ENCODE measurements at regions of chrX and their contacts with region 1.

Region 1: GRCh38 chrX:123357941-123358340 is 173.9 kb downstream of the GRIA3 start:
- DNase-seq: peak; percentile 41
- ATAC-seq: peak; percentile 95
- H3K4me3 ChIP-seq: no peak overlapping the region
- H3K27ac ChIP-seq: no peak overlapping the region; the same call in 1 of the 2 replicates
- H3K4me1 ChIP-seq: no peaks in the 10 kb centered on the region
- H3K27me3 ChIP-seq: no peaks in the 10 kb centered on the region
- CTCF ChIP-seq: no peak
- EP300 ChIP-seq: peak in 1 of 2 experiments; percentile 61; a peak in 1 of 4 replicates
- POLR2A ChIP-seq: no peak
- RAD21 ChIP-seq: 0 out of 2 replicates have a peak, but pooled peaks have one; percentile 5

Region 2: GRCh38 chrX:123267220-123267619 is 90.7 kb before region 1 on chrX:
- CTCF ChIA-PET with region 1: no interaction called
- POLR2A ChIA-PET with region 1: no interaction called
- RAD21 ChIA-PET with region 1: interaction called, 10 read pairs
- SMC1A ChIA-PET with region 1: interaction called, 3 read pairs
- in situ Hi-C with region 1: no loop called
- intact Hi-C with region 1: no loop called
- DNase-seq: no peak
- ATAC-seq: no peak
- H3K4me3 ChIP-seq: no peak overlapping the region
- H3K27ac ChIP-seq: no peak overlapping the region
- H3K4me1 ChIP-seq: no peaks in the 10 kb centered on the region
- H3K27me3 ChIP-seq: no peaks in the 10 kb centered on the region
- CTCF ChIP-seq: no peak
- EP300 ChIP-seq: no peak
- POLR2A ChIP-seq: no peak
- RAD21 ChIP-seq: no peak

Region 3: DNA sequence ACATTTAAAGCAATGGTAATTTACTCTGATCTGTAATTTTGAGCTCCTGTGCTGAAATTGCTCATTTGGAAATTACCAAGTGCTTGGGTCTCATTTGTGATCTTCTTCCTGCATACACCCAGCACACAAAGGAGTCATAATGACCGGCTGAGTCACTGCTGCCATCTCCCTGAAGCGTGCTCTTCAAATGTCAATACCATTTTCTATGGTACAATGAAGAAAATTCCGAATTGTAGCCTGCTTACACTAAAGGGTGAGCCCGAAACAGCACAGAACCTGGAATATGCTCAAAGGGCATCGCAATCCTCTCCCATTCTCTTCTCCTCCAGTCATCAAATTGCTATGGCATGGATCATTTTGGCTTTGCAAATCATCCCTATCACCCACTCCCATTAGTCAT is 33.3 kb before region 1 on chrX:
- CTCF ChIA-PET with region 1: interaction called, 7 read pairs
- POLR2A ChIA-PET with region 1: interaction called, 9 read pairs
- RAD21 ChIA-PET with region 1: interaction called, 58 read pairs
- SMC1A ChIA-PET with region 1: interaction called, 72 read pairs
- in situ Hi-C with region 1: no loop called
- intact Hi-C with region 1: no loop called
- DNase-seq: no peak
- ATAC-seq: peak; percentile 76
- H3K4me3 ChIP-seq: no peak overlapping the region
- H3K27ac ChIP-seq: no peak overlapping the region
- H3K4me1 ChIP-seq: no peaks in the 10 kb centered on the region
- H3K27me3 ChIP-seq: no peaks in the 10 kb centered on the region
- CTCF ChIP-seq: no peak
- EP300 ChIP-seq: no peak
- POLR2A ChIP-seq: no peak
- RAD21 ChIP-seq: no peak

Region 4: DNA sequence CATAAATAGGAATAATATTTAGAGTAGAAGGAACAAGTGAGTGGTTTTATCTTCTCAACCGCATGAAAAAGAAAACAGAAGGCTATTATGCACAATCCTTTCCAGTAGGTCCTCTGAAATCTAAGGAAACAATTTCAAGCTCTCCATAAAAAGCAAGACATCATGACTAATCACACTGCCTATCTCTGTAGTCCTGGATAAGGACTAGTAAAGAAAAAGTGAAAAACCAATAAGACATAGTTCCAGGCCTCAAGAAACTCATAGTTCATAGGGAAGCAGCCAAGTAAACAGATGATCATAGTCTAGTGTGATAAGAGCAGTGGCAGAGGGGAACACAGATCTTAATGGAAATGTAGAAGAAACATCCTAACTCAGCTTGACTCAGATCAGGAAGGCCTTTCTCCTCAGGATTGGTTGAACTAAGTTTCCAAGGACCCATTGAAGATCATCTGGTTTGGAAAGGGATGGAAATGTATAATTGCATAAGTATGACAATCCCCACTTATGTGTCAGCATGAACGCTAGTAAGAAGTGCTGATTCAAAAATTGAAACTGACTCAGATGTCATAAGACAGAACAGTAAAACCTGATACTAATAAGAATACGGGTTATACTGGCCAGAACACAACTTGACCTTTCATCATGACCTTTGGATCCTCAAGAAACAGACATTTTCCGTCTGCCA is 18.6 kb before region 1 on chrX:
- CTCF ChIA-PET with region 1: interaction called, 37 read pairs
- POLR2A ChIA-PET with region 1: interaction called, 28 read pairs
- RAD21 ChIA-PET with region 1: interaction called, 50 read pairs
- SMC1A ChIA-PET with region 1: interaction called, 45 read pairs
- in situ Hi-C with region 1: no loop called
- intact Hi-C with region 1: no loop called
- DNase-seq: no peak
- ATAC-seq: peak; percentile 84
- H3K4me3 ChIP-seq: no peak overlapping the region
- H3K27ac ChIP-seq: no peak overlapping the region
- H3K4me1 ChIP-seq: no peaks in the 10 kb centered on the region
- H3K27me3 ChIP-seq: no peaks in the 10 kb centered on the region
- CTCF ChIP-seq: no peak
- EP300 ChIP-seq: peak in 1 of 2 experiments; percentile 53; a peak in 1 of 4 replicates
- POLR2A ChIP-seq: no peak
- RAD21 ChIP-seq: no peak

Region 5: GRCh38 chrX:123408821-123409737 is 51.1 kb after region 1 on chrX:
- CTCF ChIA-PET with region 1: interaction called, 14 read pairs
- POLR2A ChIA-PET with region 1: interaction called, 82 read pairs
- RAD21 ChIA-PET with region 1: interaction called, 145 read pairs
- SMC1A ChIA-PET with region 1: interaction called, 208 read pairs
- in situ Hi-C with region 1: no loop called
- intact Hi-C with region 1: loop called (anchors 1 kb)
- DNase-seq: peak; percentile 57
- ATAC-seq: peak; percentile 77
- H3K4me3 ChIP-seq: no peak overlapping the region; the same call in 1 of the 2 replicates
- H3K27ac ChIP-seq: peak overlapping the region; percentile 86
- H3K4me1 ChIP-seq: peaks cover 16% of the 10 kb centered on the region
- H3K27me3 ChIP-seq: no peaks in the 10 kb centered on the region
- CTCF ChIP-seq: no peak
- EP300 ChIP-seq: peak in 1 of 2 experiments; percentile 36; a peak in 2 of 4 replicates
- POLR2A ChIP-seq: no peak
- RAD21 ChIP-seq: no peak

Region 6: DNA sequence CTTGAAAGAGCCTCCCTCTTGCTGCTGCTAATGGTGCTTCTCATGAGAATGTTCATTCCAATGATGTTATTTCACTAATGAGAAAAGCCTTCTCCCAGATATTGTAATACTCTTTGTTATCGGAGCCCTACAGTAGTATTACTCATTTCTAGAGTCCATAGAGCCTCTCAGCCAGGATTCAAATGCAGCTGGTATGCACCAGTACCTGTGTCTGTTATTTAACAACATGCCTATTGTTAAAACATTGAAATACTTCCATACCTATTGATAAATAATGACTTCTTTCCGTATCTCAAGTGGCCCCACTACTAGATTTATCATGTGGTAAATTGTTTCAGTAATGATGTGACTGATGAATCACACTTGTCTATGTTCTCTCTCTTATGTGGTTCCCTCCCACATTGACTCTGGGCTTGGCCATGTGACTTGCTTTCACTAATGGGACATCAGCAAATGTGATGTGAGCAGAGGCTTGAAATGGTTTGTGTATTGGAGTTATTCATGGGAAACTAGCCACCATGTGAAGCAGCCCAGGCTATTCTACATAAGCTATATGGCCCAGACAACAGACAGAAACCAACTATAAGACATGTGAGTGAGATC is 167.3 kb after region 1 on chrX:
- CTCF ChIA-PET with region 1: no interaction called
- POLR2A ChIA-PET with region 1: no interaction called
- RAD21 ChIA-PET with region 1: no interaction called
- SMC1A ChIA-PET with region 1: no interaction called
- in situ Hi-C with region 1: no loop called
- intact Hi-C with region 1: no loop called
- DNase-seq: no peak
- ATAC-seq: peak; percentile 77
- H3K4me3 ChIP-seq: no peak overlapping the region
- H3K27ac ChIP-seq: no peak overlapping the region
- H3K4me1 ChIP-seq: no peaks in the 10 kb centered on the region
- H3K27me3 ChIP-seq: no peaks in the 10 kb centered on the region
- CTCF ChIP-seq: no peak
- EP300 ChIP-seq: no peak
- POLR2A ChIP-seq: no peak
- RAD21 ChIP-seq: no peak

Measured in GM12878 (cell line).